Ovary (tissue), 10 donors: ENCODE measurements at regions of chr17 and their contacts with region 1.

Region 1: GRCh38 chr17:60435244-60436167 is 13.2 kb downstream of the CHCT1 start:
- DNase-seq: peak; percentile 64 to 82 (median 67)
- H3K4me3 ChIP-seq: no peak overlapping the region
- H3K27ac ChIP-seq: no peak overlapping the region
- H3K4me1 ChIP-seq: peaks cover 4% of the 10 kb centered on the region
- H3K27me3 ChIP-seq: no peaks in the 10 kb centered on the region
- CTCF ChIP-seq: peak; percentile 62 to 92 (median 92)
- EP300 ChIP-seq: no peak
- POLR2A ChIP-seq: no peak

Region 2: DNA sequence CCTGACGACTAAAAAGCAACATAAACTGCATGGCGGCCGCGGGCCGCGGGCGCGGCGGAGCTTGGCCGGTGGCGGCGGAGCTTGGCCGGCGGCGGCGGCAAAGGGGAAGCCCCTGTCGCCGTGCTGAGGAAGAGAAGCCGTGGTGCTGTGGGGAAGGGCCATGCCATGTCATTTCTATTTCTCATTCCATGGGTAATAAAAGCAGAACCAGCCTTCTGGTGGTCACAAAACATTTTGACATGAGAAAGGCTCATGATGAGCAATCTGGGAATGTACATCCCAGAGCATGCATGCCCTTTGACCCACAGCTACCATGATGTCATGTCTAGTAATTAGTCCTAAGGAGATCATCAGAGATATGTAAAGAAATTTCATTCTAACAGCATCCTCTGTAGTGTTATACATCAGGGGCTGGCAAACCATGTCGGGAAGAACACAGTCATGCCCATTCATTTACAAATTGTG is 332.8 kb before region 1 on chr17:
- intact Hi-C with region 1: loop called in 1 of 4 experiments (anchors 10 kb)
- DNase-seq: no peak
- H3K4me3 ChIP-seq: no peak overlapping the region
- H3K27ac ChIP-seq: no peak overlapping the region
- H3K4me1 ChIP-seq: no peaks in the 10 kb centered on the region
- H3K27me3 ChIP-seq: no peaks in the 10 kb centered on the region
- CTCF ChIP-seq: no peak
- EP300 ChIP-seq: no peak
- POLR2A ChIP-seq: no peak

Region 3: GRCh38 chr17:60766778-60767190 is 331.3 kb after region 1 on chr17:
- intact Hi-C with region 1: no loop called
- DNase-seq: no peak
- H3K4me3 ChIP-seq: no peak overlapping the region
- H3K27ac ChIP-seq: no peak overlapping the region
- H3K4me1 ChIP-seq: no peaks in the 10 kb centered on the region
- H3K27me3 ChIP-seq: no peaks in the 10 kb centered on the region
- CTCF ChIP-seq: no peak
- EP300 ChIP-seq: no peak
- POLR2A ChIP-seq: no peak